Naive thymus-derived CD4-positive, alpha-beta T cell (primary cell): ENCODE measurements at regions of chr1 and their contacts with region 1.

Region 1: DNA sequence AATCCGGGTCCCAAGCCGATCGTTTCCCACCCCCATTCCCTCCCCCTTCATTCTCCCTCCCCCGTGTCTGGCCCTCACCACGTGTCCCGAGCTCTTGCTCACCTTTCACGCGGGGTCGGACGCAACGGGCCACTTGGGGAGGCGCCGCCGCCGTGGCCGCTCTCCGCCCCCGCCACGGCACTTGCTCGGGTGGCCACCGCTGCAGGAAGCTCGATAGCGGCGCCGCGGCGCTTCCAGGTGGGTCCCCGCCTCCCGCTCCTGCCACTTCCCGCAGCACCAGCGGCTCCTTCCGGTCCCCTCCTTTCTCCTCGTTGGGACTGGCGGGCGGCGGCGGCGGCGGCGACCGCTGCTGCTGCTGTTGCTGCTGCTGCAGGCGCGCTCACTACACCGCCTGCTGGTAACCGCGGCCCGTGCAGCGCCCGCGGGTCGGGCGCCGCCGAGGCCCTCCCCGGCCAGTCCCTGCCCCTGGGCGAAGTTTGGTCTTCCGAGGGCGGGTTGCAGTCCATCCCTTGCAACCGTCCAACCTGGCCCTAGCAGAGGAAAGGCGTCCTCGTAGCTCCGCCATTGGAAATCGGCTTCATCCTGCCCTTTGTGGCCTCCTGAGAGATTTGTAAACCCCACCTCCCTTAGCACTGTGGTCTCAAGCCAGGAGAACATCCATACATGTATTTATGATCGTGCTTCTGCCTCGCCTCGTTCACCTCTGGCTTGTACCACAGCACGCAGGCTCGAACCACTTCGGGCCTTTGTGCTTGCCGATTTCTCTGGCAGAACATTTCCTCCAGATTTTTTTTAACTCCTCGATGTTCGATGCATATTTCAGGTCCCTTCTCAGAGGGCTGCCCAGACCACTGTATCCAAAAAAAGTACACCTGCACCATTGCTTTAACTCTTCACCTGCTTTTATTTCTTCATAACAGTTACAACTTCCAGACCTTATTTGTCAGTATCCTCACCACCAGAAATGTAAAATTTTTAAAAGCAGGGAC is 996 bp upstream of the ZZZ3 start:
- DNase-seq: peak; percentile 83 to 94 (median 92)
- ATAC-seq: peak; percentile 86
- H3K4me3 ChIP-seq: peak overlapping the region; percentile 91
- H3K4me3 Mint-ChIP-seq: peak overlapping the region; percentile 80 to 97 (median 91)
- H3K27ac ChIP-seq: peak overlapping the region; percentile 92
- H3K27ac Mint-ChIP-seq: peak overlapping the region; percentile 89 to 100 (median 97)
- H3K4me1 ChIP-seq: peaks cover 15 to 33% of the 10 kb centered on the region in 2 donors
- H3K4me1 Mint-ChIP-seq: peaks cover 20 to 51% (median 40%) of the 10 kb centered on the region in 7 donors
- H3K27me3 ChIP-seq: no peaks in the 10 kb centered on the region
- H3K27me3 Mint-ChIP-seq: no peaks in the 10 kb centered on the region

Region 2: GRCh38 chr1:76074321-76075187 is 1608.9 kb before region 1 on chr1 and contains the start of gene ST6GALNAC3:
- CTCF ChIA-PET with region 1: no interaction called
- POLR2A ChIA-PET with region 1: no interaction called
- intact Hi-C with region 1: loop called in 1 of 2 experiments (anchors 10 kb)
- DNase-seq: peak; percentile 73 to 85 (median 81)
- ATAC-seq: peak; percentile 98
- H3K4me3 ChIP-seq: peak within 1 kb of the TSS; percentile 74
- H3K4me3 Mint-ChIP-seq: peak within 1 kb of the TSS; percentile 86 to 93 (median 91)
- H3K27ac ChIP-seq: peak within 1 kb of the TSS; percentile 71
- H3K27ac Mint-ChIP-seq: peak within 1 kb of the TSS; percentile 56 to 97 (median 92)
- H3K4me1 ChIP-seq: peaks cover 9 to 15% of the 10 kb centered on the region in 2 donors
- H3K4me1 Mint-ChIP-seq: peaks cover 8 to 35% (median 26%) of the 10 kb centered on the region in 7 donors
- H3K27me3 ChIP-seq: no peaks in the 10 kb centered on the region
- H3K27me3 Mint-ChIP-seq: peaks cover 0 to 19% (median 0%) of the 10 kb centered on the region in 5 donors
- total RNA-seq, gene ST6GALNAC3: 1.9 to 4.8 (median 3.6) TPM in 4 of 5 experiments, not detected in the other

Region 3: GRCh38 chr1:77143529-77144121 is 539.8 kb before region 1 on chr1:
- CTCF ChIA-PET with region 1: no interaction called
- POLR2A ChIA-PET with region 1: no interaction called
- intact Hi-C with region 1: loop called (anchors 1 to 2 kb)
- DNase-seq: peak in 4 of 9 donors; percentile 9 to 31 (median 18)
- ATAC-seq: no peak
- H3K4me3 ChIP-seq: no peak overlapping the region
- H3K4me3 Mint-ChIP-seq: no peak overlapping the region
- H3K27ac ChIP-seq: no peak overlapping the region
- H3K27ac Mint-ChIP-seq: no peak overlapping the region
- H3K4me1 ChIP-seq: peaks cover 0 to 3% of the 10 kb centered on the region in 2 donors
- H3K4me1 Mint-ChIP-seq: peaks cover 0 to 8% (median 6%) of the 10 kb centered on the region in 7 donors
- H3K27me3 ChIP-seq: no peaks in the 10 kb centered on the region
- H3K27me3 Mint-ChIP-seq: no peaks in the 10 kb centered on the region

Region 4: GRCh38 chr1:77538956-77539518 is 144.4 kb before region 1 on chr1:
- CTCF ChIA-PET with region 1: no interaction called
- POLR2A ChIA-PET with region 1: no interaction called
- intact Hi-C with region 1: no loop called
- DNase-seq: no peak
- ATAC-seq: no peak
- H3K4me3 ChIP-seq: no peak overlapping the region
- H3K4me3 Mint-ChIP-seq: no peak overlapping the region
- H3K27ac ChIP-seq: no peak overlapping the region
- H3K27ac Mint-ChIP-seq: no peak overlapping the region
- H3K4me1 ChIP-seq: no peaks in the 10 kb centered on the region
- H3K4me1 Mint-ChIP-seq: peaks cover 0 to 9% (median under 1%) of the 10 kb centered on the region in 7 donors
- H3K27me3 ChIP-seq: no peaks in the 10 kb centered on the region
- H3K27me3 Mint-ChIP-seq: no peaks in the 10 kb centered on the region

Region 5: DNA sequence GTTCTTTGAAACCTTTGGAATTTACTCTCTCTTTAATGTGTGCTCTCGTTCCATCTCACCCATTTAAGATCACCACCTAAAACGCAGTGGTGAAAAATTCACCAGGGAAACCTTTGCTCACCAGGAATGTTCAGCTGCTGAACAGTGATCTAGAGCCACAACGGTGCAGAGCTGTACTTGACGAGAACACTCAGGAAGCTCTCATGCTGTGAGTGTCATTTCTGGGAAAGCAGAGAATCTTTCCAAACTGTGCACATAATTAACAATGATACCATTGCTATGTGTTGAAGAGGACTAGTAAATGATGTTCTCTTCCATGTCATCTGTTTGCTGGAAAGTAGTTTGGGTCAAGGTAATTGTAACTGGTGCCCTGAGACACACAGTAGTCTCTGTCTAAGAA is 118.1 kb before region 1 on chr1:
- CTCF ChIA-PET with region 1: no interaction called
- POLR2A ChIA-PET with region 1: no interaction called
- intact Hi-C with region 1: loop called in 1 of 2 experiments (anchors 5 kb)
- DNase-seq: no peak
- ATAC-seq: no peak
- H3K4me3 ChIP-seq: no peak overlapping the region
- H3K4me3 Mint-ChIP-seq: no peak overlapping the region
- H3K27ac ChIP-seq: no peak overlapping the region
- H3K27ac Mint-ChIP-seq: peak overlapping the region in 8 of 9 donors; percentile 6 to 80 (median 32)
- H3K4me1 ChIP-seq: no peaks in the 10 kb centered on the region
- H3K4me1 Mint-ChIP-seq: peaks cover 0 to 8% (median 0%) of the 10 kb centered on the region in 7 donors
- H3K27me3 ChIP-seq: no peaks in the 10 kb centered on the region
- H3K27me3 Mint-ChIP-seq: no peaks in the 10 kb centered on the region

Region 6: GRCh38 chr1:77759071-77760028 is 75.9 kb after region 1 on chr1 and contains the start of gene USP33:
- CTCF ChIA-PET with region 1: no interaction called
- POLR2A ChIA-PET with region 1: interaction called, 12 read pairs
- intact Hi-C with region 1: loop called (anchors 1 kb)
- DNase-seq: peak; percentile 87 to 98 (median 92)
- ATAC-seq: peak; percentile 98
- H3K4me3 ChIP-seq: peak within 1 kb of the TSS; percentile 61
- H3K4me3 Mint-ChIP-seq: peak within 1 kb of the TSS; percentile 93 to 98 (median 96)
- H3K27ac ChIP-seq: peak within 1 kb of the TSS; percentile 86
- H3K27ac Mint-ChIP-seq: peak within 1 kb of the TSS; percentile 84 to 97 (median 94)
- H3K4me1 ChIP-seq: peaks cover 24 to 25% of the 10 kb centered on the region in 2 donors
- H3K4me1 Mint-ChIP-seq: peaks cover 28 to 64% (median 43%) of the 10 kb centered on the region in 7 donors
- H3K27me3 ChIP-seq: no peaks in the 10 kb centered on the region
- H3K27me3 Mint-ChIP-seq: peaks cover 0 to 10% (median 0%) of the 10 kb centered on the region in 5 donors
- total RNA-seq, gene USP33: 54.0 to 101 (median 86.4) TPM

Region 7: GRCh38 chr1:78114034-78114956 is 430.8 kb after region 1 on chr1:
- CTCF ChIA-PET with region 1: no interaction called
- POLR2A ChIA-PET with region 1: no interaction called
- intact Hi-C with region 1: loop called (anchors 1 to 2 kb)
- DNase-seq: peak; percentile 15 to 71 (median 58)
- ATAC-seq: peak; percentile 93
- H3K4me3 ChIP-seq: no peak overlapping the region
- H3K4me3 Mint-ChIP-seq: no peak overlapping the region
- H3K27ac ChIP-seq: no peak overlapping the region
- H3K27ac Mint-ChIP-seq: no peak overlapping the region
- H3K4me1 ChIP-seq: no peaks in the 10 kb centered on the region
- H3K4me1 Mint-ChIP-seq: peaks cover 0 to 9% (median 0%) of the 10 kb centered on the region in 7 donors
- H3K27me3 ChIP-seq: no peaks in the 10 kb centered on the region
- H3K27me3 Mint-ChIP-seq: peaks cover 0 to 2% (median 0%) of the 10 kb centered on the region in 5 donors